Dorsolateral prefrontal cortex (tissue), 120 donors: ENCODE measurements at regions of chr17 and their contacts with region 1.

Region 1: DNA sequence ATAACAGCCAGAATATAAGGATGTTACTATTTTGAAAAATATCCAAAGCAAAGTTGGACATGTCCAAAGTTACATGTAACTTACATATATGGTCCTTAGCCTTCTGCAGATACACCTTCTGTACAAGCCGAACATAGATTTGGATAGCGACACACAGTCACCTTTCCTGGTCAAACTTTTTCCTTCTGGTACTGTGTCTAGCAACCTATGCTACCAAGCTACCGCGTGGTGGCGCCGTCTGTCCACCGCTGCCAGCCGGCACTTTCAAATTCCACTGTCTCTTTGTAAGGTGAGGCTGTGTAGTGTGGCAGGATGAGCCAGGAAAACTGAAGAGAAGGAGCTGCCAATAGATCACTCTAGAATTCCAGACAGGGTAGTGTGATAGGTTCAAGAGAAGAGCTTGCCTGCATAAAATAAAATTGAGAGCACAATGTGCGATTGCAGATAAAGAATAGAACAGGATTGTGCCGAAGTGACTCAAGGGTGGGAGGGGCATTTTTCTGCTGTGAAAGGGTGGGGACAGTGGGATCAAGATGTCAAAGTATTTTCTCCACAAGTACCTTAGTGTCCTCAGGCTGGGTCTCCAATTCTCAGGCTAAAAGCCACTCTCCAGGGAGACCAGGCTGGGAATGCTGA is 366.9 kb downstream of the SLC39A11 start:
- DNase-seq: peak; percentile 43 to 81 (median 70)
- H3K4me3 ChIP-seq: no peak overlapping the region
- H3K27ac ChIP-seq: no peak overlapping the region
- H3K27me3 ChIP-seq: no peaks in the 10 kb centered on the region
- CTCF ChIP-seq: peak; percentile 51 to 98 (median 87)

Region 2: DNA sequence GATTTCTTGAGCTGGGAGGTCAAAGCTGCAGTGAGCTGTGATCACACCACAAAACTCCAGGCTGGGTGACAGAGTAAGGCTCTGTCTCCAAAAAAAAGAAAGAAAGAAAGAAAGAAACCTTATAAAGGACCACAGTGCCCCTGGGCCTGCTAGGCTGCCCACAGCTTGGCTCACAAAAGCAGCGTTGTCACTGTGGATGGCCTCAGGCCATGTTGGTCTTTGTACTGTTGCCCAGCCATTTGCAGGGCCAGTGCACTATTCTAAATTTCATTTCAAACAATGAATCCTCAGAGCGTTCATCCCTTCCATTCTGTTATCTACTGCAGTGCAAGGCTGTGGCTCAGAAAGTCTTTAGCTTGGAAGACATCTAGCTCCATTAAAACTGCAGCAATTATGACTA is 158.5 kb after region 1 on chr17:
- intact Hi-C with region 1: loop called in 1 of 2 experiments (anchors 10 kb)
- DNase-seq: peak; percentile 21 to 92 (median 80)
- H3K4me3 ChIP-seq: peak overlapping the region in 1 of 59 donors; percentile 17
- H3K27ac ChIP-seq: peak overlapping the region in 58 of 59 donors; percentile 1 to 95 (median 86)
- H3K27me3 ChIP-seq: no peaks in the 10 kb centered on the region
- CTCF ChIP-seq: peak in 20 of 56 donors; percentile 5 to 57 (median 17)

Region 3: GRCh38 chr17:72976971-72977770 is 251.6 kb after region 1 on chr17:
- intact Hi-C with region 1: loop called in 1 of 2 experiments (anchors 10 kb)
- DNase-seq: no peak
- H3K4me3 ChIP-seq: peak overlapping the region in 1 of 59 donors; percentile 17
- H3K27ac ChIP-seq: peak overlapping the region in 20 of 59 donors; percentile 7 to 72 (median 30)
- H3K27me3 ChIP-seq: no peaks in the 10 kb centered on the region
- CTCF ChIP-seq: no peak

Region 4: GRCh38 chr17:73092523-73093135 is 367.1 kb after region 1 on chr17 and contains the start of gene SLC39A11:
- intact Hi-C with region 1: loop called in 1 of 2 experiments (anchors 5 kb)
- DNase-seq: peak; percentile 94 to 97 (median 95)
- H3K4me3 ChIP-seq: peak within 1 kb of the TSS; percentile 48 to 88 (median 73)
- H3K27ac ChIP-seq: peak within 1 kb of the TSS; percentile 65 to 99 (median 96)
- H3K27me3 ChIP-seq: no peaks in the 10 kb centered on the region
- CTCF ChIP-seq: peak in 23 of 56 donors; percentile 4 to 43 (median 25)
- total RNA-seq, gene SLC39A11: 14.9 to 129 (median 47.9) TPM

Region 5: DNA sequence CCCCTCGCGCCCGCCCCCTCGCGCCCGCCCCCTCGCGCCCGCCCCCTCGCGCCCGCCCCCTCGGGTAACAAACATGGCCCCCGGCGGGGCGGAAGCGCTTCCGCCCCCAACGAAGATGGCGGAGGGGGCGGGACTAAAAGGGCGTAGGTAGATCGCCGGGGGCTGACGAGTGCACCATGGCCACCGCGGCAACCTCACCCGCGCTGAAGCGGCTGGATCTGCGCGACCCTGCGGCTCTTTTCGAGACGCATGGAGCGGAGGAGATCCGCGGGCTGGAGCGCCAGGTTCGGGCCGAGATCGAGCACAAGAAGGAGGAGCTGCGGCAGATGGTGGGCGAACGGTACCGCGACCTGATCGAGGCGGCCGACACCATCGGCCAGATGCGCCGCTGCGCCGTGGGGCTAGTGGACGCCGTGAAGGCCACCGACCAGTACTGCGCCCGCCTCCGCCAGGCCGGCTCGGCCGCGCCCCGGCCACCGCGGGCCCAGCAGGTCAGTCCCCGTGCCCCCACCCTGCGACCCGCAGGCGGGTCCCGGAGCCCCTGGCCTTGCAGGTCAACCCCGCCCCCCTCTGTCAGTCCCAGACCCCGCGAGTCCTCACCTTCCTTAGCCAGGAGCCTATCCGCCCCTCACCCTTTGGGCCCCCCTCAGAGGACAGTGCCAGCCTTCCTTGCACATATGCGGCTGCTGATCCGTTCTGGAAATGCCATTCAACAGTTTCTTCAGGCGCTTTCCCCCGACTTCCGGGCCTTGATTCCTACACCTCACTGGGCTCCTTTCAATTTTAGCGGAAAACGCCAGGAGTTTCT is 467.5 kb after region 1 on chr17 and contains the start of gene COG1:
- intact Hi-C with region 1: loop called (anchors 1 to 5 kb)
- DNase-seq: peak; percentile 51 to 85 (median 74)
- H3K4me3 ChIP-seq: peak within 1 kb of the TSS; percentile 73 to 100 (median 95)
- H3K27ac ChIP-seq: peak within 1 kb of the TSS; percentile 47 to 94 (median 86)
- H3K27me3 ChIP-seq: no peaks in the 10 kb centered on the region
- CTCF ChIP-seq: peak in 6 of 56 donors; percentile 3 to 39 (median 11)
- total RNA-seq, gene COG1: 48.4 to 137 (median 85.4) TPM

Region 6: DNA sequence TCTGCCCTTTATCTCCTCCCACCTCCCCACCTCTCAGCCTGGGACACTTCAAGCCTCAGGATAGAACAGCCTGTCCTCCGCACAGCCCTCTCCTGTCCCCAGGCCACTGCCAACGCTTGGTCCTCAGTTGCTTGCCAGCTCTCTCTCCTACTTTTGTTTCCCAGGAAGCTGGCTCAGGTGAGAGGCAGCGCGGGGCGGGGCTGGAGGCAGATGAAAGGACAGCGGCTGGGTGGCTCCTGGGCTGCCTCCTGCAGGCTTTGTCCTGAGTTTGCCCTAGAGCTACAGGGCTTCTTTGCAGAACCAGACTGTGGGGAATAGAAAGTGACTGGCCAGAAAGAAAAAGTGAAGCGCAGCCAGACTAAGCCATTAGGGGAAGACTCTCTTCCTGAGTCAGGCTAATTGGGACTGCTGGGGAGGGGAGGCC is 634.4 kb after region 1 on chr17:
- intact Hi-C with region 1: loop called in 1 of 2 experiments (anchors 10 kb)
- DNase-seq: peak in 1 of 10 donors; percentile 31
- H3K4me3 ChIP-seq: no peak overlapping the region
- H3K27ac ChIP-seq: peak overlapping the region in 7 of 59 donors; percentile 1 to 53 (median 22)
- H3K27me3 ChIP-seq: no peaks in the 10 kb centered on the region
- CTCF ChIP-seq: no peak